Endothelial cell of umbilical vein (primary cell): ENCODE measurements at regions of chr12 and their contacts with region 1.

Region 1: DNA sequence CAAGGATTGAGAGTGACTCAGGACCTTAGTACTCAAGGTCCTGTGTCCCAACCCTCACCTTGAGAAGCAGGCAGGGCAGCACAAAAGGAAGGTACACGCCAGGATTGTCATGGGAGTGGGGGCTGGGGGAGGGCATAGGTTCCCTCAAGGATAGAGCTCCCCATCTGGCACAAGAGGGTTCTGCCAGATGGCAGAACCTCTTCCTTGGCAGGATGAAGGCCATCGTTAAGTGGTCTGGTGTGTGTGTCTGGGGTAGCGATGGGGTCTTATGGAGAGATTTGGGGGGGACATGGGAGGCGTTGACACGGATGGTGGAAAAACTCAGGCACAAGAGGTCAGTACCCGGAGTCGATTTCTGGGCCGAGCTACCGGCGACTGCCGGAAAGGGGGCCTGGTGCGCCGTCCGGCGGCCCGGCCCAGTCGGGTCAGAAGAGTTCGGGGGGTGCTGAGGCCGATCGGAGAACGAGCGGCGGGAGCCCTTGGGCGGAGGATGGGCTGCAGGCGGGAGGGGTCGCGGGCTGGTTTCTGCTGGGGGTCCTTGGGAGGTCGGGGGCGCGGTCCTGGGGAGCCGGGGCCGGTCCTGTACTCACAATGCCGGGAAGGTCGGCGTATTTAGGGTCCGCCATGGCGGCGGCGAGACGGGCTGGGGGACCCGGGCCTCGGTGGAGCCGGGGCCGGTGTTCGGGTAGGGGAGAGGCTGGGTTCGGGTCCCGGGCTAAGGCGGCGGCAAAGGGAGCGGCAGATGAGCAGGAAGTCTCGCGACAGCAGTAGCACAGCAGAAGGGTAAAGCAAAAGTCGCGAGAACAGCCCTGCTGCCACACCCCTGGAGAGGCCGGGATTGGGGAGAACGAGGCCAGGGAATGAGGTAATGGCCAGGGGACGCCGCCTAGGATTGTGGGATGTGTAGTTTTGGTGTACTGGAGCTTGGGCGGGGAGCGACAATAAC is at the start of gene DCTN2:
- DNase-seq: peak; percentile 96
- H3K4me3 ChIP-seq: peak within 1 kb of the TSS; percentile 80 to 94 (median 82)
- H3K27ac ChIP-seq: peak within 1 kb of the TSS; percentile 77
- H3K4me1 ChIP-seq: peaks cover 18% of the 10 kb centered on the region
- H3K27me3 ChIP-seq: peaks cover 27 to 37% of the 10 kb centered on the region in 2 experiments
- CTCF ChIP-seq: no peak
- POLR2A ChIP-seq: no peak
- total RNA-seq, gene DCTN2: 157 and 161 TPM in 2 replicates

Region 2: DNA sequence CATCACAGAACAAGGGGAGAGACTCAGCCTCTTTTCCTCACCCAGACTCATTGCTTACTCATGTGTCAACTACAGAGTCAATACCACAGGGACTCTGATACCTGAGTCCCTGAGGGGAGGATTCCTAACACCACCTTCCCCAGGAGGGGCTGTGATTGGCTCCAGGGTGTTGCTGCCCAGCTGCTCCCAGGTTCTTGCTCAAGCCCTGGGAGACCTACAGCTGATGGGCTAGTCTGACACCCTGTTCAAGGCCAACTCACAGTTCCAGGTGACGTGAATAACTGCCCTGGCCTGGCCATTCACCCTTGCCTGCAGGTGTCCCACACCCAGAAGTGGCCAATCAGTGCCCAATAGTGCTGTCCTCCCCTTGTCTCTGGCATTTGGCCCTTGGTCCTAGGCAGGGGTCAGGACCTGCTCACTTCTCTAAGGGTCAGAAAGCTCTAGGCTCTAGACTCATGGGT is 1069.7 kb before region 1 on chr12:
- CTCF ChIA-PET with region 1: no interaction called
- POLR2A ChIA-PET with region 1: no interaction called
- dilution Hi-C with region 1: no loop called
- intact Hi-C with region 1: no loop called
- DNase-seq: no peak
- H3K4me3 ChIP-seq: no peak overlapping the region
- H3K27ac ChIP-seq: no peak overlapping the region
- H3K4me1 ChIP-seq: no peaks in the 10 kb centered on the region
- H3K27me3 ChIP-seq: no peaks in the 10 kb centered on the region
- CTCF ChIP-seq: no peak
- POLR2A ChIP-seq: no peak

Region 3: DNA sequence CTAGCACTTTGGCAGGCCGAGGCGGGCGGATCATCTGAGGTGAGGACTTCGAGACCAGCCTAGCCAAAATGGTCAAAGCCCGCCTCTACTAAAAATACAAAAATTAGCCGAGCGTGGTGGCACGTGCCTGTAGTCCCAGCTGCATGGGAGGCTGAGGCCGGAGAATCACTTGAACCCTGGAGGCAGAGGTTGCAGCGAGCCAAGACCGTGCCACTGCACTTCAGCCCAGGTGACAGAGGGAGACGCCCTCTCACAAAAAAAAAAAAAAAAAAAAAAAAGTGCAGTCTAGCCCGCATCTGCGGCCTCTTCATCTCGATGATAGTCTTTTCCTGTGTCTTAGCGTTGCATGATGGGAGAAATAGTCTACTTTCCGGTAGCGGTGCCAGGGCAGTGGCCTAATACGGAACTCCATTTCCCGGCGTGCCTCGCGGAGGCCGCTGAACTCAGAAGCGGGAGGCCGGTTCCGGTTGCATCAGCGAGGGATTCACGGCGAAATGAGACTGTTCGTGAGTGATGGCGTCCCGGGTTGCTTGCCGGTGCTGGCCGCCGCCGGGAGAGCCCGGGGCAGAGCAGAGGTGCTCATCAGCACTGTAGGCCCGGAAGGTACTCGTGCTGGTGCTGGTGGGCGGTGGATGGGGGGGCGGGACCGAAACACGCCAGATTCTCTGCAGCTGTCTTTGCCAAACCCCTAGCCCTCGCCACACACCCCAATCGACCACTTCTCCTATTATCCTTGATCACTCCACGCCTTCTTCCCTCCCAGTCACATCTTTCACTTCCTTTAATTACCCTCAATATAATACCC is 58.9 kb before region 1 on chr12 and contains the start of gene MARS1:
- CTCF ChIA-PET with region 1: no interaction called
- POLR2A ChIA-PET with region 1: no interaction called
- dilution Hi-C with region 1: no loop called
- intact Hi-C with region 1: loop called (anchors 2 kb)
- DNase-seq: peak; percentile 95
- H3K4me3 ChIP-seq: peak within 1 kb of the TSS; percentile 60 to 99 (median 94)
- H3K27ac ChIP-seq: peak within 1 kb of the TSS; percentile 48
- H3K4me1 ChIP-seq: peaks cover 9% of the 10 kb centered on the region
- H3K27me3 ChIP-seq: no peaks in the 10 kb centered on the region
- CTCF ChIP-seq: no peak
- POLR2A ChIP-seq: peak; percentile 86
- total RNA-seq, gene MARS1: 212 and 216 TPM in 2 replicates

Region 4: DNA sequence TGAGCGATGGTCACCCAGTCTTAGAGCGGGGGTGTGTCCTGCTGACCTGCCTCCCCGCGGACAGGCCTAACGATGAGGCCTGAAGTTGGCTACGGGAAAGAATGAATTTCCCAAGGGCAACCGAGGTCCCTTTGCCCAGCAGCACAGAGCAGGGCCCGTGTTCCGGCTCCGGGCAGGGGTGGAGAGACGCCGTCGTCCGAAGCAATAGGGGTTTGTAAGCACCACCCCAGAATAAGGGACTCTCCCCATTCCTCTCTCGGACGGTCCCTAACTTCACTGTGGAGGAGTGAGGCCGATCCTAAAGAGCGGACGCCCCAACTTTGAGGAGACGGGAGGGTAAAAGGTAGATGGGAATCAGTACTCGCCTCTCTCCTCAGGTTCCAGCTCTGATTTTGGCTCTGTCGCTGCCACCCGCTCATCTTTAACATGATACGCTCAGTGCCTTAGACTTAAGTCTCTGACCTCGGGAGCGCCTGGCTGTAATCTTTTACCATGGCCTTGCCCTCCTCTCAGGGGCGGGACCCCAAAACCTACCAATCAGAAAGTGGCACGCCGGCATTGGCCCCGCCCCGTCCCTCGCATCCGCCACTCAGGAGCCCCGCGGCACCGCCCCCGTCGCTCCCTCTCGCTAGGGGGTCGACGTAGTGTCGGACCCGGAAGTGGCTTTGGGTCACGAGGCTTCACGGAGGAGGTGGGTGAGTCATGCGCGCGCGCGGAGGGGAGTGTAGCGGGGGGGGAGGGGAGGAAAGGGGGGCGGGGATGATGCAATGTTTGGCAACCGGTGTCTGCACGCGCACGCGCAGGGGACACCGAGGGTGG is 26.4 kb before region 1 on chr12 and contains the start of gene DDIT3:
- CTCF ChIA-PET with region 1: interaction called, 6 read pairs
- POLR2A ChIA-PET with region 1: interaction called, 8 read pairs
- dilution Hi-C with region 1: no loop called
- intact Hi-C with region 1: loop called (anchors 1 kb)
- DNase-seq: peak; percentile 99
- H3K4me3 ChIP-seq: peak within 1 kb of the TSS; percentile 7 to 89 (median 67)
- H3K27ac ChIP-seq: peak within 1 kb of the TSS; percentile 83
- H3K4me1 ChIP-seq: peaks cover 48% of the 10 kb centered on the region
- H3K27me3 ChIP-seq: no peaks in the 10 kb centered on the region
- CTCF ChIP-seq: no peak
- POLR2A ChIP-seq: peak; percentile 100
- total RNA-seq, gene DDIT3: 9.8 and 13.7 TPM in 2 replicates

Region 5: DNA sequence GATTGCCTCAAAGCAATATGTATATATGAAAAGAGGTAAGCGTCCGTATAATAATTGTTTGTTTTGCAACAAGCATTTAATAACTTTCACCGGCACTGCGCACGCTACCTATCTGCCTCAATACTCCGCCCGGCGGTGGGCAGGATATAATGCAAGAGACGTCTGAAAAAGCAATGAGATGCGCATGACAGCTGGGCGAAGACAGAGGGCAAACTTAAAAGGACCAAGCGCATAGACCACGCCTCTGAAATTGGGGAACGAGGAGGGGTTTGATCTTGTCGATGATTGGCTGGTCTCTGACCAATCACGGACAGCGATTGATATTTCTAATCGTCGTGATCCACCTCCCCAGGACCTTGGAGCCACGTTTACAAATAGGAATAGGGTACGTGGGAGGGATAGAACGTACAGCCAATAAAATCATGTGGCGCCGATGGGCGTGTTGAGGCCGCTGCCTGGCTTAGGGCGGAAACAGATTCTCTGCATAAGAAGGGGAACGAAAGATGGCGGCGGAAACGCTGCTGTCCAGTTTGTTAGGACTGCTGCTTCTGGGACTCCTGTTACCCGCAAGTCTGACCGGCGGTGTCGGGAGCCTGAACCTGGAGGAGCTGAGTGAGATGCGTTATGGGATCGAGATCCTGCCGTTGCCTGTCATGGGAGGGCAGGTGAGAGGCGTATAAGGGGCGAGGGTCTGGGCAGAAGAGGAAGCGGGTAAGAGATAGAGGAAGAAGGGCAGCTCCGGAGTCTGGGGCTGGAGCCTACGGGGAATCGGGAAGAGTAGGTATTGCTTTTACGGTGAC is 147.1 kb after region 1 on chr12 and contains the start of gene OS9:
- CTCF ChIA-PET with region 1: no interaction called
- POLR2A ChIA-PET with region 1: no interaction called
- dilution Hi-C with region 1: no loop called
- intact Hi-C with region 1: loop called (anchors 5 kb)
- DNase-seq: peak; percentile 100
- H3K4me3 ChIP-seq: peak within 1 kb of the TSS; percentile 38 to 77 (median 72)
- H3K27ac ChIP-seq: peak within 1 kb of the TSS; percentile 36
- H3K4me1 ChIP-seq: peaks cover 7% of the 10 kb centered on the region
- H3K27me3 ChIP-seq: no peaks in the 10 kb centered on the region
- CTCF ChIP-seq: peak; percentile 65 to 66
- POLR2A ChIP-seq: peak; percentile 92
- total RNA-seq, gene OS9: 188 and 212 TPM in 2 replicates

Region 6: GRCh38 chr12:58346032-58346632 is 799.4 kb after region 1 on chr12:
- CTCF ChIA-PET with region 1: no interaction called
- POLR2A ChIA-PET with region 1: no interaction called
- dilution Hi-C with region 1: no loop called
- intact Hi-C with region 1: no loop called
- DNase-seq: peak; percentile 58
- H3K4me3 ChIP-seq: no peak overlapping the region
- H3K27ac ChIP-seq: no peak overlapping the region
- H3K4me1 ChIP-seq: peaks cover 22% of the 10 kb centered on the region
- H3K27me3 ChIP-seq: no peaks in the 10 kb centered on the region
- CTCF ChIP-seq: peak; percentile 34 to 47
- POLR2A ChIP-seq: no peak